CD4-positive, alpha-beta memory T cell (primary cell): ENCODE measurements at regions of chr1 and their contacts with region 1.

Region 1: GRCh38 chr1:7667625-7668218 is 103.4 kb upstream of the VAMP3 start:
- DNase-seq: peak; percentile 72 to 81 (median 75)
- H3K4me3 ChIP-seq: no peak overlapping the region
- H3K4me3 Mint-ChIP-seq: no peak overlapping the region
- H3K27ac ChIP-seq: no peak overlapping the region
- H3K27ac Mint-ChIP-seq: peak overlapping the region in 3 of 7 donors; percentile 61 to 70 (median 63)
- H3K4me1 ChIP-seq: peaks cover 5% of the 10 kb centered on the region
- H3K4me1 Mint-ChIP-seq: peaks cover 0 to 6% (median 4%) of the 10 kb centered on the region in 4 donors
- H3K27me3 ChIP-seq: no peaks in the 10 kb centered on the region
- H3K27me3 Mint-ChIP-seq: no peaks in the 10 kb centered on the region

Region 2: DNA sequence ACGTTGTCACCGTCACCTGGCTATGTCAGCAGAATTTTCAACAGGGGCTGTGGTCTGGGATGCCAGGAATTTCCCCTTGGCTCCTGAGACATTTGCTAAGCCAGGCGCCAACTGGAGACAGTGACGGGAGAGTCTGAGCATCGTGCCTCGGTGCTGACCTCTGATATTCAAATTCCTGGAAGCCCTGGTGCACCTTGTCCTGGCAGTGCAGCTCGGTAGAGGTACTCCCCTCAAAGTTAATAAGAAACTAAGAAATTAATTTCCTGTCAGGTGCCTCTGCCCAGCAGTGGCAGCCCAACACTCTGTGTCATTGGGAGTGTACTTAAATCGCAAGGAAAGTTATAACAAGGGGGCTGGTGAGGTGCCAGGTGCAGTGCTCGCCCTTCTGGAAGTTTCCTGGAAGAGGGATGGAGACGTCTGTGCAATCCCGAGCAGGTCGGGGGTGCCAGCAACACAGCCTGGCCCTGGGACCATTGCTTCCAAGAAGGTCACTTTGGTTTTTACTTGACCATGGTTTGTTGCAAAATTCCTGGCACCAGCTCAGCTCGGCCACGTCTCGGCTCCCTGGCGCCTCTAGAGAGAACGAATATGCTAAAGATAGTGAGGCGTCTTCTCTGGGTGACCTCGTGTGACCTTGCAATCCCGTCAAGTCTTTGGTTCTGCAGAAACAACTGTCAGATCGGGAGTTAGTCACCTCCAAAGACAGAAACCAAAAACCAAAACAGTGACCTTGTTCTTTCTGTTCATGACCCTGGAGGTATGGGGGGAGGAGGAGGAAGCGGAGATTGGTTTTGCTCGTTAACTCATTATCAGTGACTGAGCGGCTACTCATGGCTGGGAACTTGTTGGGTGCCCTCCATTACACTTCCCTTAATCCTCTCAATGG is 46.1 kb before region 1 on chr1:
- CTCF ChIA-PET with region 1: no interaction called
- POLR2A ChIA-PET with region 1: no interaction called
- intact Hi-C with region 1: no loop called
- DNase-seq: no peak
- H3K4me3 ChIP-seq: no peak overlapping the region
- H3K4me3 Mint-ChIP-seq: no peak overlapping the region
- H3K27ac ChIP-seq: no peak overlapping the region
- H3K27ac Mint-ChIP-seq: no peak overlapping the region
- H3K4me1 ChIP-seq: no peaks in the 10 kb centered on the region
- H3K4me1 Mint-ChIP-seq: no peaks in the 10 kb centered on the region
- H3K27me3 ChIP-seq: no peaks in the 10 kb centered on the region
- H3K27me3 Mint-ChIP-seq: peaks cover 22 to 36% of the 10 kb centered on the region in 2 donors

Region 3: GRCh38 chr1:7680207-7680954 is 12.7 kb after region 1 on chr1:
- CTCF ChIA-PET with region 1: interaction called, 33 read pairs
- POLR2A ChIA-PET with region 1: interaction called, 8 read pairs
- intact Hi-C with region 1: no loop called
- DNase-seq: peak in 4 of 5 donors; percentile 48 to 55 (median 50)
- H3K4me3 ChIP-seq: peak overlapping the region; percentile 42 to 66
- H3K4me3 Mint-ChIP-seq: peak overlapping the region; percentile 74 to 88 (median 80)
- H3K27ac ChIP-seq: peak overlapping the region; percentile 31
- H3K27ac Mint-ChIP-seq: peak overlapping the region in 1 of 7 donors; percentile 42
- H3K4me1 ChIP-seq: peaks cover 9% of the 10 kb centered on the region
- H3K4me1 Mint-ChIP-seq: peaks cover 0 to 1% (median 0%) of the 10 kb centered on the region in 4 donors
- H3K27me3 ChIP-seq: no peaks in the 10 kb centered on the region
- H3K27me3 Mint-ChIP-seq: peaks cover 0 to 5% of the 10 kb centered on the region in 2 donors

Region 4: DNA sequence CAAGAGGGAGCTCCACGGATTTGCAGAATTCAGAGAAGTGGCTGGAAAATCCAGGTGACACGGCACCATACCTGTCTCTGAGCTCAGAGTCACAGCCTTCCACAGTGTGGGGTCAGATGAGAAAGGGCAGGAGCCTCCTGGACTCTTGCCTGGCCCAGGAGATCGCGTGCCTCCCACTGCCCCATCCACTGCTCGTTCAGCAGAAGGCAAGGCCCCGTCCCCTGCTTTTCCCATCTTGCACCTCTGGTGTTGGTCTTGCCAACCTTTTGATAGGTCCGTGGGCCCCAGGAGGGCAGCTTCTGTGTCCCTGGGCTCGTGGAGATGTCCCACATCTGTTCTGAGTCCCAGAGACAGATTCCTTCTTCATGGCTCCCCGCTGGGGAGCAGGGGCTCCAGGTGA is 19.7 kb after region 1 on chr1:
- CTCF ChIA-PET with region 1: interaction called, 14 read pairs
- POLR2A ChIA-PET with region 1: interaction called, 8 read pairs
- intact Hi-C with region 1: no loop called
- DNase-seq: no peak
- H3K4me3 ChIP-seq: no peak overlapping the region
- H3K4me3 Mint-ChIP-seq: no peak overlapping the region
- H3K27ac ChIP-seq: no peak overlapping the region
- H3K27ac Mint-ChIP-seq: no peak overlapping the region
- H3K4me1 ChIP-seq: no peaks in the 10 kb centered on the region
- H3K4me1 Mint-ChIP-seq: no peaks in the 10 kb centered on the region
- H3K27me3 ChIP-seq: no peaks in the 10 kb centered on the region
- H3K27me3 Mint-ChIP-seq: peaks cover 4 to 11% of the 10 kb centered on the region in 2 donors

Region 5: DNA sequence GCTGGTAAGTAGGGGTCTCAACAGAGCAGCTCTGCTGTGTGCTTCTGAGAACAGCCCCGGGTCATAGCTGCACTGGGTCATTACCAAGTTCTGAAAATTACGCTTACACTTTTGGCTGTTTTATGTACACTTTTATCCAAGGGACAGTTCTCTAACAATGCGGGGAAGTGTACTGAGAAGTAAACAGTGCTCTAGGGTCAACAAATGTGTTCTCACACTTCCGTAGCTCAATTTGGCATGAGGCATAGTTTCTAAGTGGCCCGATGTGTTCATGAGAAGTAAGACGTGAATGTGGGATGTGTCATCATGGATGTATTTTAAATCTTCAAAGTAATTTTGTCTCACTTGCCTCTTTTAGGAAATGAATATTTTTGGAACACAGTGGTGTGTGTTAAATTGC is 92.5 kb after region 1 on chr1:
- CTCF ChIA-PET with region 1: interaction called, 468 read pairs
- POLR2A ChIA-PET with region 1: no interaction called
- intact Hi-C with region 1: no loop called
- DNase-seq: no peak
- H3K4me3 ChIP-seq: no peak overlapping the region
- H3K4me3 Mint-ChIP-seq: no peak overlapping the region
- H3K27ac ChIP-seq: no peak overlapping the region
- H3K27ac Mint-ChIP-seq: no peak overlapping the region
- H3K4me1 ChIP-seq: no peaks in the 10 kb centered on the region
- H3K4me1 Mint-ChIP-seq: no peaks in the 10 kb centered on the region
- H3K27me3 ChIP-seq: no peaks in the 10 kb centered on the region
- H3K27me3 Mint-ChIP-seq: peaks cover 6 to 10% of the 10 kb centered on the region in 2 donors

Region 6: GRCh38 chr1:7902478-7903085 is 234.9 kb after region 1 on chr1:
- CTCF ChIA-PET with region 1: interaction called, 26 read pairs
- POLR2A ChIA-PET with region 1: interaction called, 4 read pairs
- intact Hi-C with region 1: loop called (anchors 1 kb)
- DNase-seq: peak; percentile 51 to 58 (median 55)
- H3K4me3 ChIP-seq: no peak overlapping the region
- H3K4me3 Mint-ChIP-seq: peak overlapping the region; percentile 57 to 76 (median 70)
- H3K27ac ChIP-seq: no peak overlapping the region
- H3K27ac Mint-ChIP-seq: no peak overlapping the region
- H3K4me1 ChIP-seq: no peaks in the 10 kb centered on the region
- H3K4me1 Mint-ChIP-seq: peaks cover 0 to 13% (median 2%) of the 10 kb centered on the region in 4 donors
- H3K27me3 ChIP-seq: no peaks in the 10 kb centered on the region
- H3K27me3 Mint-ChIP-seq: no peaks in the 10 kb centered on the region